PC-9 (cell line): ENCODE measurements at regions of chr12 and their contacts with region 1.

Region 1: GRCh38 chr12:106136263-106136662 is 2.5 kb downstream of the NUAK1 start:
- DNase-seq: peak; percentile 76 to 79
- H3K4me3 ChIP-seq: peak overlapping the region; percentile 78
- H3K27ac ChIP-seq: peak overlapping the region; percentile 11; the same call in 1 of the 2 replicates
- H3K4me1 ChIP-seq: peaks cover 69% of the 10 kb centered on the region
- H3K27me3 ChIP-seq: no peaks in the 10 kb centered on the region
- CTCF ChIP-seq: peak; percentile 96

Region 2: GRCh38 chr12:105420659-105421240 is 715.5 kb before region 1 on chr12:
- CTCF ChIA-PET with region 1: interaction called, 3 read pairs
- POLR2A ChIA-PET with region 1: no interaction called
- intact Hi-C with region 1: loop called (anchors 1 kb)
- DNase-seq: peak; percentile 53 to 59
- H3K4me3 ChIP-seq: no peak overlapping the region
- H3K27ac ChIP-seq: no peak overlapping the region
- H3K4me1 ChIP-seq: 0 out of 2 replicates have a peak, but pooled peaks cover 5% of the 10 kb centered on the region
- H3K27me3 ChIP-seq: no peaks in the 10 kb centered on the region
- CTCF ChIP-seq: peak; percentile 97

Region 3: GRCh38 chr12:105562199-105562971 is 573.9 kb before region 1 on chr12:
- CTCF ChIA-PET with region 1: interaction called, 5 read pairs
- POLR2A ChIA-PET with region 1: no interaction called
- intact Hi-C with region 1: loop called (anchors 5 kb)
- DNase-seq: peak; percentile 66 to 84
- H3K4me3 ChIP-seq: peak overlapping the region; percentile 55; the same call in 1 of the 2 replicates
- H3K27ac ChIP-seq: peak overlapping the region; percentile 74
- H3K4me1 ChIP-seq: peaks cover 26% of the 10 kb centered on the region
- H3K27me3 ChIP-seq: no peaks in the 10 kb centered on the region
- CTCF ChIP-seq: no peak

Region 4: GRCh38 chr12:105934274-105934673 is 202.0 kb before region 1 on chr12:
- CTCF ChIA-PET with region 1: no interaction called
- POLR2A ChIA-PET with region 1: no interaction called
- intact Hi-C with region 1: loop called (anchors 2 kb)
- DNase-seq: peak; percentile 65 to 98
- H3K4me3 ChIP-seq: peak overlapping the region; percentile 20; the same call in 1 of the 2 replicates
- H3K27ac ChIP-seq: peak overlapping the region; percentile 86
- H3K4me1 ChIP-seq: peaks cover 62% of the 10 kb centered on the region
- H3K27me3 ChIP-seq: no peaks in the 10 kb centered on the region
- CTCF ChIP-seq: no peak

Region 5: GRCh38 chr12:106149096-106149784 is 13.0 kb after region 1 on chr12:
- CTCF ChIA-PET with region 1: interaction called, 13 read pairs
- POLR2A ChIA-PET with region 1: no interaction called
- intact Hi-C with region 1: no loop called
- DNase-seq: peak in 1 of 2 experiments; percentile 27
- H3K4me3 ChIP-seq: no peak overlapping the region
- H3K27ac ChIP-seq: no peak overlapping the region
- H3K4me1 ChIP-seq: no peaks in the 10 kb centered on the region
- H3K27me3 ChIP-seq: no peaks in the 10 kb centered on the region
- CTCF ChIP-seq: peak; percentile 68; the same call in 1 of the 2 replicates

Region 6: GRCh38 chr12:106197906-106198623 is 61.8 kb after region 1 on chr12:
- CTCF ChIA-PET with region 1: no interaction called
- POLR2A ChIA-PET with region 1: no interaction called
- intact Hi-C with region 1: no loop called
- DNase-seq: no peak
- H3K4me3 ChIP-seq: no peak overlapping the region
- H3K27ac ChIP-seq: no peak overlapping the region
- H3K4me1 ChIP-seq: no peaks in the 10 kb centered on the region
- H3K27me3 ChIP-seq: peaks cover 5% of the 10 kb centered on the region; the same call in 1 of the 2 replicates
- CTCF ChIP-seq: no peak

Region 7: DNA sequence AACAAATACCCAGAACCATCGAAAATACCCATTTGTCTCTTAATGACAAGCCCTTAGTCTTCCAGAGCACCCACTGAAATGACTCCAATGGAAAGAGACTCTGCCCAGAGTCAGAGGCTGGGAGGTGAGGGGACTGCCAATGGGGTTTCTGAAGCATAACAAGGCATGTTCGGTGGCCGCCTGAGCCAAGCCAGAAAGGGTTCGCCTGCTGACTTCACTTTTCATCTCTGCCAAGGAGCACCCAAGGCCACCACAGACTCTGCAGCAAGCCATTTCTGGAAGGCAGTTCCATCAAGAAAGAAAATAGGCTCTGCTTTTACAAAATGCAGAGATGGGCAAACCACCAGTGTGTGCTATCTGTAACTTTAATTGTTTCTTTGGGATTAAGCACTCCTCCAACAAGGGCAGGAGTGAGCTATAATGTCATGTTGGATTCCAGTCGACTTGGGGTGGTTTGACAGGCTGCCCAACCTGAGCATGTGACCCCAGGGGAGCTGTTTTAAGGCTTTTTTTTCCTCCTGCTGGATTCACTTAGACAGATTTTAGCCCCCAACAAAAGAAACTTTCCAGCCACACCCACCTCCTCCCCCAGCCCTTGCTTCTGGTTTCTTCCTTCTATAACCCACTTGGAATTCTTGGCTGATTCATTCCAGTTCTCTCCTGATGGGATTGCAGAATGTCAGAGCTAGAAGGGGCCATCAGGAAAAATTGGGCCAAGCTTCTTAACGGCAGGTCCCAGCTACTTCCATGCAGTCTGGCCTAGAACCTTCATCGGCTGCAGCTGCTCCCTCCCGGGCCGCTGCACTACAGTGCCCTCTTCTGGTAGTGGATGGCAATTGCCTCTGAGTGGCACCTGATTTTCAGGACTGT is 87.5 kb after region 1 on chr12:
- CTCF ChIA-PET with region 1: interaction called, 5 read pairs
- POLR2A ChIA-PET with region 1: no interaction called
- intact Hi-C with region 1: loop called (anchors 5 kb)
- DNase-seq: peak in 1 of 2 experiments; percentile 70
- H3K4me3 ChIP-seq: no peak overlapping the region
- H3K27ac ChIP-seq: no peak overlapping the region
- H3K4me1 ChIP-seq: peaks cover 7% of the 10 kb centered on the region
- H3K27me3 ChIP-seq: no peaks in the 10 kb centered on the region
- CTCF ChIP-seq: peak; percentile 93